Activated CD8-positive, alpha-beta memory T cell treated with anti-CD3 and anti-CD28 coated beads, Interleukin-2, amount 10 ng/mL, durations not matched to agents 7 days and 5 days (primary cell): ENCODE measurements at regions of chr1 and their contacts with region 1.

Region 1: DNA sequence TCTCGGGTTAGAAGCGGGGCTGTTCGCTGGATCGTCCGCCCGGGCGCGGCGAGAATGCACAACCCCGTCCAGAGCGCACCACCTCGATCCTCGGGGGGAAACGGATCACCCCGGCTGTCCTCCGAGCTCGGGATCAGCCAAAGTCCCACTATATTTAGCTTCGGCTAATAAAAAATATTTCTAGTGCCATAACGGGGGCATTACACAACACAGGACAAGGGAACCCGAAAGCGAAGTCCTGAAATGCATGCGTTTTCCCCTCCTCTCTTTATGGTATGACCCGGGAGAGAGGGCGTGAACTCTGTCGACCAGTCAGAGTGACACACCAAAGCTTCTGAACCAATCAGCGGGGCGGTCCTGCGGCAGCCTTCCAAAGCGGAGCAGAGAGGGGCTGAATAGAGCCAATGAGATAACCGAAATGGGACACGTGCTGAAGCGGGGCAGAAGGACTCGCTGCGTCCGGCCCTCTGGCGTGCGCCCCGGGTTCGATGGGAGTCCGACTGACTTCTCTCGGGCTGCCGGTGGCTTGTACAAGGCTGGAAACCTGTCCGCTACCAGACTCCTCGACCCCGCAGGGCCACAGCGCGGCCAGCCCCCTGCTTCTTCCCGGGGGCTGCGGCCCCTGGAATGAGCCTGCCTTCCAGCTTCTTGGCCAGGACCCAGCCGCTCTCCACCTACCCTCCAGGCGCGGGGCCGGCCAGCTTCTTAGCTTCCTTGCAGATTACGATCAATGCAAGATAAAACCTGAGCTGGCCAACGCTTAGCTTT is at the start of gene ALDH4A1:
- DNase-seq: peak; percentile 98
- ATAC-seq: peak; percentile 99
- H3K4me3 Mint-ChIP-seq: peak within 1 kb of the TSS; percentile 92
- H3K27ac Mint-ChIP-seq: peak within 1 kb of the TSS; percentile 97
- H3K4me1 Mint-ChIP-seq: peaks cover 19% of the 10 kb centered on the region
- H3K27me3 Mint-ChIP-seq: no peaks in the 10 kb centered on the region
- total RNA-seq, gene ALDH4A1: 4.5 to 5.8 TPM

Region 2: GRCh38 chr1:18949686-18950400 is 47.1 kb after region 1 on chr1:
- CTCF ChIA-PET with region 1: interaction called, 17 read pairs
- DNase-seq: no peak
- ATAC-seq: no peak
- H3K4me3 Mint-ChIP-seq: peak overlapping the region; percentile 47
- H3K27ac Mint-ChIP-seq: peak overlapping the region; percentile 94
- H3K4me1 Mint-ChIP-seq: peaks cover 86% of the 10 kb centered on the region
- H3K27me3 Mint-ChIP-seq: peaks cover 17% of the 10 kb centered on the region

Region 3: GRCh38 chr1:18972531-18972930 is 69.8 kb after region 1 on chr1:
- CTCF ChIA-PET with region 1: interaction called, 24 read pairs
- DNase-seq: no peak
- ATAC-seq: peak; percentile 16
- H3K4me3 Mint-ChIP-seq: no peak overlapping the region
- H3K27ac Mint-ChIP-seq: no peak overlapping the region
- H3K4me1 Mint-ChIP-seq: no peaks in the 10 kb centered on the region
- H3K27me3 Mint-ChIP-seq: peaks cover 18% of the 10 kb centered on the region

Region 4: GRCh38 chr1:19096036-19096833 is 193.5 kb after region 1 on chr1:
- CTCF ChIA-PET with region 1: interaction called, 33 read pairs
- DNase-seq: no peak
- ATAC-seq: peak; percentile 33
- H3K4me3 Mint-ChIP-seq: no peak overlapping the region
- H3K27ac Mint-ChIP-seq: no peak overlapping the region
- H3K4me1 Mint-ChIP-seq: no peaks in the 10 kb centered on the region
- H3K27me3 Mint-ChIP-seq: no peaks in the 10 kb centered on the region